ENCODE measurements at regions of chr10 and their contacts with region 1.

Region 1: DNA sequence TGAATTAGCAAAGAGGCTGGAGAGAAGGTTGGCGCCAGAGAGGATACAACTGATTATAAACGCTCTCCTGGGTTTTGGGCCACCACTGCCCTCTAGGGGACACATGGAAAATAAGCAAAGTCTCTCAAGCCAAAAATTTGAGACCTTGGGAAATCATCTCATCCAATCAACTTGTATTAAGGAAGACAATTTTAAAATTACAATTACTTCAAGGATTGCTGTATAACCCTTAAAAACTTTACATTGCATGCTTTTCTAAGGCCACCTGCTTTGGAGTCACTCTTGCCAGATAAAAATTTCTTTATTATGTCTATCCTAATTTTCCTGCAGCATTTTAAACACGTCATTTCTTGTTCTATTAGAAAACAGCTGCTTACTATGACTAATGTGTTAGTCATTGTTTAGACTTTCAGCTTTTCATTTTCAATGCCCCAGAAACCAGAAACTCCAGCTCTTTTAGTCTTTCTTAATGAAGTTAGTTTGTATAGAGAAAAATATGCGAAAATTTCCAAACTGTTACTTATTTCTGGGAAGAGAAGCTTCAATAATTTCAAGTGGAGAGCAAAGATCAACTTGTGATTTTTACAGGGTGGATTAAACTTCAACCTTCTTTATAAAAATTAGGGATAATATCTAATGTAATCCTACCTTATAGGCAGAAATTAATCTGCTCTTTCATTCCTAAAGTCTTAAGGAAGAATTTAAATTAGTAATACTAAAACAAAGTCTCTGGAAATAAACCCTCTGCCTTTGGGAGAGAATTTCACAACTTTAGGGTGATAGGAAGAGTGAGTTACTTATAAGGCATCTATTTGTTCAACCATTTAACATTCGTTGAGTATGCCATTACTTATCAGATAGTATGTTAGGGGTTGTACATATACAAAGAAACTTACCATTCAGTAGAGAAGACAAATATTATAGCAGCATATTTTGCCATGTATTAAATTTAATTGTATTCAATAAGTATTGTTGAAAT is 20.6 kb upstream of the RHOBTB1 start:
- DNase-seq: peak in 1 of 2 donors; percentile 70
- ATAC-seq: peak; percentile 89
- H3K4me3 ChIP-seq: no peak overlapping the region
- H3K27ac ChIP-seq: no peak overlapping the region
- H3K4me1 ChIP-seq: no peaks in the 10 kb centered on the region
- H3K27me3 ChIP-seq: no peaks in the 10 kb centered on the region

Region 2: DNA sequence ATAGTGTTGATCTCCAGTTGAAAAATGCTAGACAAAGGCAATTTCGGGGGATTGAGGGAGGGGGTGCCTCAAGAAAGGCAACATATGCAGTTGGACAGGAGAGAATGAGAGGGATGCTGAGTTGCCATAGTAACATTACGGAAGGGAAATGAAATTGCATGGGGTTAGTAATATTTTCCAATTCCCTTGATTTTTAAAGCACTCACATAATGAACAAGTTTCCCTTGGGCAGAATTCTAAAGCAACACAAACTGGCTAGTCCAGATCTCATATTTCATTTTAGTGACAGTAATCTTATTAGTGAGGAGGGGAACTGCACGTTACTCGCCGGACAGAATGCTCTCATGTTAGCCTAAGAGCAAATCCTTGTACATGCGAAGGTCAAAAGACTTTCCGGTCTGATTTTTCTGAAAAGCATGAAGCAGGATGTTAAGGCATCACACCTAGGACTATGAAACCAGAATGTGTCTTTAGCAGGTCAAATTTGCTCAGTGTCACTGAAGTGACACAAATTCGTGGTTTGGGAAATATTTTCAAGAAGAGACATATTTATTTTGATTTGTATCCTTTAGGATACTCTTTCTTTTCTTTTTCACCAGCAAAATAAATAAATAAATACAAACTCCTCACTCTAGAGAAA is 740.4 kb before region 1 on chr10:
- intact Hi-C with region 1: no loop called
- DNase-seq: no peak
- ATAC-seq: no peak
- H3K4me3 ChIP-seq: no peak overlapping the region
- H3K27ac ChIP-seq: no peak overlapping the region
- H3K4me1 ChIP-seq: no peaks in the 10 kb centered on the region
- H3K27me3 ChIP-seq: no peaks in the 10 kb centered on the region

Region 3: DNA sequence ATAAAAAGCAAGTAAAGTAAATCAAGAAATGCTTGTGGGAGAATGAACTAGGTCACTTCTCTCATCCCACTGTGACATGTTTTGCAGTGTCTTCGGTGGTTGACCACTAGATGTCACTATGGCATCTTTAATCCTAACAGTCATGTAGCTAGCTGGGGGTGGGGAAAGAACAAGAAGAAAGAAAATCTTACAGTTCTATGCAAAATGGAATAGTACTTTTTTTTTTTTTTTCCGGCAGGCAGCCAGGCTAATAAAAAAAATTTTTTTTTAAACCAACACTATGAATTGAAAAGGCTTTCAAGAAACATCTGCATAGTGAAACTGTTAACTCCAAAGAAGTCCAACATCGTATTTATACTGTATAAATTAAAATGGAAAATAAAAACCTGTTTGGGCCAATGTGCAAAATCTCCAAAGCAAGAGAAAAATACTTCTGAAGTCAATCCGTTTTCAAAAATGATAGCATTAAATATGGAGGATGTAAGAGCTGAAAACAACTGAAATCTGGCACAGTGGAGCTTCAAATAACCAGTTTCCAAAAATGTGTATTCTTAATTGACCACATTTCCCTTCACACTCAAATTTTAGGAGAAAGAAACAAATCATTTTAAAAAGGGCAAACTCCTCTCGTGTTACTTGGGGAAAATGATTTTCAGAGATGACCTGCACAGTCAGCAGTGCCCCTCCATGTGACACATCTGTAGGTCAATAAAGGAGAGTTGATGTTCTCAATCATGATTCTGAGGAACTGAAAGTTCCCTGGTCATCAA is 147.7 kb before region 1 on chr10:
- intact Hi-C with region 1: loop called (anchors 2 kb)
- DNase-seq: no peak
- ATAC-seq: peak; percentile 92
- H3K4me3 ChIP-seq: no peak overlapping the region
- H3K27ac ChIP-seq: no peak overlapping the region
- H3K4me1 ChIP-seq: peaks cover 0 to 4% of the 10 kb centered on the region in 2 donors
- H3K27me3 ChIP-seq: no peaks in the 10 kb centered on the region

Region 4: DNA sequence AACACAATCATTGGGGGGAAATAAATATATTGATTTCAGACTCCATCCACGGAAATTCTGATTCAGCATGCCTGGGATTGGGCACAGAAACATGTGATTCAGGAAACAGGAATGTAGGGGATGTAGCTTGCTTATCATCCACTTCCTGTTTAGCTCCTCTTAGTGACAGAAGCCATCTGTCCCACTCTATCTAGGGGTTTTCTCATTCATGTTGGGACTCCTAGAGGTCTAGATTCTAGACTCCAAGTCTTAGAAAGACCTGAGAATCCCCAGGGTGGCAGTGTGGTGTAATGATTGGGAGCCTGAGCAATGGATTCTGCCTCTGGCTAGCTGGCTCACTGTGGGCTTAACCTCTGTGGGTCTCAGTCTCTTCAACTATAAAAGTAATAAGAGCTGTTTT is 118.4 kb before region 1 on chr10:
- intact Hi-C with region 1: no loop called
- DNase-seq: no peak
- ATAC-seq: no peak
- H3K4me3 ChIP-seq: no peak overlapping the region
- H3K27ac ChIP-seq: no peak overlapping the region
- H3K4me1 ChIP-seq: no peaks in the 10 kb centered on the region
- H3K27me3 ChIP-seq: no peaks in the 10 kb centered on the region